Naive thymus-derived CD4-positive, alpha-beta T cell (primary cell): ENCODE measurements at regions of chr13 and their contacts with region 1.

Region 1: GRCh38 chr13:28636674-28637317 is 22.1 kb upstream of the POMP start:
- DNase-seq: peak in 8 of 9 donors; percentile 25 to 66 (median 58)
- ATAC-seq: peak; percentile 78
- H3K4me3 ChIP-seq: no peak overlapping the region
- H3K4me3 Mint-ChIP-seq: peak overlapping the region; percentile 1 to 65 (median 34)
- H3K27ac ChIP-seq: no peak overlapping the region
- H3K27ac Mint-ChIP-seq: peak overlapping the region in 5 of 9 donors; percentile 3 to 49 (median 13)
- H3K4me1 ChIP-seq: peaks cover 0 to 7% of the 10 kb centered on the region in 2 donors
- H3K4me1 Mint-ChIP-seq: peaks cover 0 to 8% (median 7%) of the 10 kb centered on the region in 7 donors
- H3K27me3 ChIP-seq: no peaks in the 10 kb centered on the region
- H3K27me3 Mint-ChIP-seq: peaks cover 5 to 24% (median 17%) of the 10 kb centered on the region in 5 donors

Region 2: GRCh38 chr13:28058866-28059624 is 577.8 kb before region 1 on chr13:
- CTCF ChIA-PET with region 1: interaction called, 3 read pairs
- POLR2A ChIA-PET with region 1: no interaction called
- intact Hi-C with region 1: loop called (anchors 1 to 10 kb)
- DNase-seq: peak in 7 of 9 donors; percentile 10 to 33 (median 17)
- ATAC-seq: peak; percentile 38
- H3K4me3 ChIP-seq: no peak overlapping the region
- H3K4me3 Mint-ChIP-seq: no peak overlapping the region
- H3K27ac ChIP-seq: no peak overlapping the region
- H3K27ac Mint-ChIP-seq: peak overlapping the region in 1 of 9 donors; percentile 62
- H3K4me1 ChIP-seq: no peaks in the 10 kb centered on the region
- H3K4me1 Mint-ChIP-seq: peaks cover 0 to 4% (median 0%) of the 10 kb centered on the region in 7 donors
- H3K27me3 ChIP-seq: peaks cover 2 to 3% of the 10 kb centered on the region in 2 donors
- H3K27me3 Mint-ChIP-seq: peaks cover 8 to 24% (median 16%) of the 10 kb centered on the region in 5 donors

Region 3: GRCh38 chr13:28199089-28199488 is 437.7 kb before region 1 on chr13:
- CTCF ChIA-PET with region 1: no interaction called
- POLR2A ChIA-PET with region 1: no interaction called
- intact Hi-C with region 1: no loop called
- DNase-seq: no peak
- ATAC-seq: no peak
- H3K4me3 ChIP-seq: no peak overlapping the region
- H3K4me3 Mint-ChIP-seq: no peak overlapping the region
- H3K27ac ChIP-seq: no peak overlapping the region
- H3K27ac Mint-ChIP-seq: no peak overlapping the region
- H3K4me1 ChIP-seq: peaks cover under 1 to 6% of the 10 kb centered on the region in 2 donors
- H3K4me1 Mint-ChIP-seq: peaks cover 2 to 30% (median 22%) of the 10 kb centered on the region in 7 donors
- H3K27me3 ChIP-seq: no peaks in the 10 kb centered on the region
- H3K27me3 Mint-ChIP-seq: no peaks in the 10 kb centered on the region

Region 4: GRCh38 chr13:28401303-28402056 is 235.3 kb before region 1 on chr13:
- CTCF ChIA-PET with region 1: no interaction called
- POLR2A ChIA-PET with region 1: no interaction called
- intact Hi-C with region 1: loop called in 1 of 2 experiments (anchors 10 kb)
- DNase-seq: no peak
- ATAC-seq: peak; percentile 57
- H3K4me3 ChIP-seq: no peak overlapping the region
- H3K4me3 Mint-ChIP-seq: no peak overlapping the region
- H3K27ac ChIP-seq: no peak overlapping the region
- H3K27ac Mint-ChIP-seq: no peak overlapping the region
- H3K4me1 ChIP-seq: no peaks in the 10 kb centered on the region
- H3K4me1 Mint-ChIP-seq: peaks cover 0 to 5% (median 0%) of the 10 kb centered on the region in 7 donors
- H3K27me3 ChIP-seq: peaks cover 0 to 2% of the 10 kb centered on the region in 2 donors
- H3K27me3 Mint-ChIP-seq: no peaks in the 10 kb centered on the region

Region 5: GRCh38 chr13:28505641-28506051 is 131.2 kb before region 1 on chr13:
- CTCF ChIA-PET with region 1: no interaction called
- POLR2A ChIA-PET with region 1: no interaction called
- intact Hi-C with region 1: loop called in 1 of 2 experiments (anchors 2 kb)
- DNase-seq: peak in 5 of 9 donors; percentile 45 to 59 (median 50)
- ATAC-seq: peak; percentile 83
- H3K4me3 ChIP-seq: no peak overlapping the region
- H3K4me3 Mint-ChIP-seq: peak overlapping the region in 6 of 10 donors; percentile 13 to 59 (median 50)
- H3K27ac ChIP-seq: no peak overlapping the region
- H3K27ac Mint-ChIP-seq: peak overlapping the region in 8 of 9 donors; percentile 39 to 88 (median 79)
- H3K4me1 ChIP-seq: no peaks in the 10 kb centered on the region
- H3K4me1 Mint-ChIP-seq: peaks cover 7 to 14% (median 10%) of the 10 kb centered on the region in 7 donors
- H3K27me3 ChIP-seq: no peaks in the 10 kb centered on the region
- H3K27me3 Mint-ChIP-seq: peaks cover 0 to 14% (median 0%) of the 10 kb centered on the region in 5 donors

Region 6: GRCh38 chr13:28650284-28650683 is 13.5 kb after region 1 on chr13:
- CTCF ChIA-PET with region 1: no interaction called
- POLR2A ChIA-PET with region 1: no interaction called
- intact Hi-C with region 1: no loop called
- DNase-seq: no peak
- ATAC-seq: no peak
- H3K4me3 ChIP-seq: no peak overlapping the region
- H3K4me3 Mint-ChIP-seq: no peak overlapping the region
- H3K27ac ChIP-seq: no peak overlapping the region
- H3K27ac Mint-ChIP-seq: no peak overlapping the region
- H3K4me1 ChIP-seq: no peaks in the 10 kb centered on the region
- H3K4me1 Mint-ChIP-seq: peaks cover 2 to 8% (median 4%) of the 10 kb centered on the region in 7 donors
- H3K27me3 ChIP-seq: no peaks in the 10 kb centered on the region
- H3K27me3 Mint-ChIP-seq: no peaks in the 10 kb centered on the region

Region 7: GRCh38 chr13:28792992-28793391 is 156.2 kb after region 1 on chr13:
- CTCF ChIA-PET with region 1: no interaction called
- POLR2A ChIA-PET with region 1: no interaction called
- intact Hi-C with region 1: loop called in 1 of 2 experiments (anchors 5 kb)
- DNase-seq: no peak
- ATAC-seq: no peak
- H3K4me3 ChIP-seq: no peak overlapping the region
- H3K4me3 Mint-ChIP-seq: no peak overlapping the region
- H3K27ac ChIP-seq: no peak overlapping the region
- H3K27ac Mint-ChIP-seq: no peak overlapping the region
- H3K4me1 ChIP-seq: no peaks in the 10 kb centered on the region
- H3K4me1 Mint-ChIP-seq: peaks cover 0 to 6% (median 4%) of the 10 kb centered on the region in 7 donors
- H3K27me3 ChIP-seq: no peaks in the 10 kb centered on the region
- H3K27me3 Mint-ChIP-seq: peaks cover 16 to 42% (median 30%) of the 10 kb centered on the region in 5 donors

Region 8: DNA sequence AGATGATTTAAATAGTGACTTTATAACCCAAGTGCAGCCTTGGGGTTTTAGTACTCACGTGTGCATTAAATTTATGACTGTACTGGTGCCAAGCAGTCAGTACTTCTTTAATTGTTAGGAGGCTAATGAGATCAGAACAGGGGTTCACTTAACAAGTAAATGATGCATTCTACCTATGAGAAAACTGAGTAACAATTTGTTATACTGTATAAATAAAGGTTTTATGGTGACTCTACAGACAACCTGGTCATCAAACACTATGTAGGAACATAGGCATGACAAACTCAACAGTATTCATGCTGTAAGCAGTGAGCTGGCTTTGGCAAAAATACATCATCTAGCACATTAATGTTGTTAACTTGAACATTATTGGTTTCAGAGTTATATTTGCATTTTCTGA is 1138.0 kb after region 1 on chr13:
- CTCF ChIA-PET with region 1: no interaction called
- POLR2A ChIA-PET with region 1: no interaction called
- intact Hi-C with region 1: no loop called
- DNase-seq: no peak
- ATAC-seq: no peak
- H3K4me3 ChIP-seq: no peak overlapping the region
- H3K4me3 Mint-ChIP-seq: no peak overlapping the region
- H3K27ac ChIP-seq: no peak overlapping the region
- H3K27ac Mint-ChIP-seq: peak overlapping the region in 1 of 9 donors; percentile 26
- H3K4me1 ChIP-seq: no peaks in the 10 kb centered on the region
- H3K4me1 Mint-ChIP-seq: peaks cover 0 to 25% (median 13%) of the 10 kb centered on the region in 7 donors
- H3K27me3 ChIP-seq: no peaks in the 10 kb centered on the region
- H3K27me3 Mint-ChIP-seq: no peaks in the 10 kb centered on the region